ENCODE measurements at regions of chr7 and their contacts with region 1.

Region 1: DNA sequence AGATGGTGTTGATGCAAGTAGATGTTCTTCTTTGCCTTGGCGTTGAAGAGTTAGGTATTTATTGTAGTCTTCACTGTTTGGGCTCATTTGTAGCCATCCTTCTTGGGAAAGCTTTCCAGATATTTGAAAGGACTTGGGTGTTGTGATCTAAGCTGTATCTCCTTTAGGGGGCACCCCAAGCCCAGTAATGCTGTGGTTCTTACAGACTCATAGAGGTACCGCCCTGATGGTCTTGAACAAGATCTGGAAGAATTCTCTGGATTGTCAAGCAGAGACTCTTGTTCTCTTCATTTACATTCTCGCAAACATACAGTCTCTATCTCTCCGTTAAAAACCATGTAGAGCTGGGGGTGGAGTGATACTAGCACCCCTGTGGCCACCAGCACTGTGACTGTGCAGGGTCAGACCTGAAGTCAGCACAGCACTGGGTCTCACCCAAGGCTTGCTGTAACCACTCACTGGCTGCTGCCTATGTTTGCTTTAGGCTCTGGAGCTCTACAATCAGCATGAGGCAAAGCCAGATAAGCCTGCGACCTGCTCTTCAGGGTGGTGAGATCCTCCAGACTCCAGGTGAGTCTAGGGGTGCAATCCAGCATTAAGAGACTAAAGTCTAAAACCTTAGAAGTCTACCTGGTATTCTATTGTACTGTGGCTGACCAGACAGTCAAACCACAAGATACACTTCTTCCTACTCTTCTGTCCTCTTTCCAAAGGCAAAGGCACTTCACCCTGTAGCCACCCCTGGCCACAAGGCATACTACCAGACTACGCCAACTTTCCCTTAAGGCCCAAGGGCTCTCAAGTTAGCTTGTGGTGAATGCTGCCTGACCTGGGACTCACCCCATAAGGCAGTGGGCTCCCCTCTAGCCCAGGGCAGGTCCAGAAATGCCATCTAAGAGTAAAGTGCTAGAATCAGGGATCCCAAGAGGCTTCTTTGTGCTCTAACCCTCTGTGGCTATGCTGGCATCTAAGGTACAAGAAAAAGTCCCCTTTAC is 209.7 kb upstream of the TMEM196 start:
- DNase-seq: peak; percentile 74
- ATAC-seq: peak; percentile 62
- H3K4me3 Mint-ChIP-seq: no peak overlapping the region
- H3K27ac Mint-ChIP-seq: peak overlapping the region; percentile 86
- H3K4me1 Mint-ChIP-seq: peaks cover 51% of the 10 kb centered on the region
- H3K27me3 Mint-ChIP-seq: no peaks in the 10 kb centered on the region
- CTCF ChIP-seq: no peak

Region 2: GRCh38 chr7:19944363-19945120 is 38.6 kb before region 1 on chr7:
- CTCF ChIA-PET with region 1: no interaction called
- POLR2A ChIA-PET with region 1: no interaction called
- DNase-seq: no peak
- ATAC-seq: no peak
- H3K4me3 Mint-ChIP-seq: no peak overlapping the region
- H3K27ac Mint-ChIP-seq: no peak overlapping the region; the same call in 1 of the 2 replicates
- H3K4me1 Mint-ChIP-seq: no peaks in the 10 kb centered on the region
- H3K27me3 Mint-ChIP-seq: no peaks in the 10 kb centered on the region
- CTCF ChIP-seq: no peak

Region 3: GRCh38 chr7:20199015-20199737 is 216.0 kb after region 1 on chr7:
- CTCF ChIA-PET with region 1: interaction called, 11 read pairs
- POLR2A ChIA-PET with region 1: no interaction called
- DNase-seq: no peak
- ATAC-seq: peak; percentile 18; the same call in 1 of the 2 replicates
- H3K4me3 Mint-ChIP-seq: no peak overlapping the region
- H3K27ac Mint-ChIP-seq: peak overlapping the region; percentile 33
- H3K4me1 Mint-ChIP-seq: peaks cover 29% of the 10 kb centered on the region
- H3K27me3 Mint-ChIP-seq: no peaks in the 10 kb centered on the region
- CTCF ChIP-seq: no peak

Measured in WTC11 (cell line).